OCI-LY7 (cell line): ENCODE measurements at regions of chr10 and their contacts with region 1.

Region 1: DNA sequence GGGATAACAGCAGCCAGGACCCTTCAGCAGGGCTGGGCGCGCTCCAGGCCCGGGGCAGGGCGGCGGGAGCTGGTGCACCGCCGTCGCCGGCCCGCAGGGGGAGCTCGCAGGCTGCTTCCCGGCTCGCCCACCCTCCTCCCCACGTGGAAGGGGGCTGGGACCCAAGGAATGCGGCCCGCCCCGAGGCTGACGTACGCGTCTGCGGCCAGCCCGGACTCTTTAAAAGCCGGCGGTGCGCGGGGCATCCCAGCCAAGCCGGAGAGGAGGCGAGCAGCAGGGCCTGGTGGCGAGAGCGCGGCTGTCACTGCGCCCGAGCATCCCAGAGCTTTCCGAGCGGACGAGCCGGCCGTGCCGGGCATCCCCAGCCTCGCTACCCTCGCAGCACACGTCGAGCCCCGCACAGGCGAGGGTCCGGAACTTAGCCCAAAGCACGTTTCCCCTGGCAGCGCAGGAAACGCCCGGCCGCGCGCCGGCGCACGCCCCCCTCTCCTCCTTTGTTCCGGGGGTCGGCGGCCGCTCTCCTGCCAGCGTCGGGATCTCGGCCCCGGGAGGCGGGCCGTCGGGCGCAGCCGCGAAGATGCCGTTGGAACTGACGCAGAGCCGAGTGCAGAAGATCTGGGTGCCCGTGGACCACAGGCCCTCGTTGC is at the start of gene PFKFB3:
- DNase-seq: peak; percentile 97
- H3K4me3 ChIP-seq: peak within 1 kb of the TSS; percentile 99
- H3K27ac ChIP-seq: peak within 1 kb of the TSS; percentile 63
- H3K4me1 ChIP-seq: peaks cover 53% of the 10 kb centered on the region
- CTCF ChIP-seq: peak; percentile 84
- total RNA-seq, gene PFKFB3: 29.0 and 33.7 TPM in 2 replicates

Region 2: DNA sequence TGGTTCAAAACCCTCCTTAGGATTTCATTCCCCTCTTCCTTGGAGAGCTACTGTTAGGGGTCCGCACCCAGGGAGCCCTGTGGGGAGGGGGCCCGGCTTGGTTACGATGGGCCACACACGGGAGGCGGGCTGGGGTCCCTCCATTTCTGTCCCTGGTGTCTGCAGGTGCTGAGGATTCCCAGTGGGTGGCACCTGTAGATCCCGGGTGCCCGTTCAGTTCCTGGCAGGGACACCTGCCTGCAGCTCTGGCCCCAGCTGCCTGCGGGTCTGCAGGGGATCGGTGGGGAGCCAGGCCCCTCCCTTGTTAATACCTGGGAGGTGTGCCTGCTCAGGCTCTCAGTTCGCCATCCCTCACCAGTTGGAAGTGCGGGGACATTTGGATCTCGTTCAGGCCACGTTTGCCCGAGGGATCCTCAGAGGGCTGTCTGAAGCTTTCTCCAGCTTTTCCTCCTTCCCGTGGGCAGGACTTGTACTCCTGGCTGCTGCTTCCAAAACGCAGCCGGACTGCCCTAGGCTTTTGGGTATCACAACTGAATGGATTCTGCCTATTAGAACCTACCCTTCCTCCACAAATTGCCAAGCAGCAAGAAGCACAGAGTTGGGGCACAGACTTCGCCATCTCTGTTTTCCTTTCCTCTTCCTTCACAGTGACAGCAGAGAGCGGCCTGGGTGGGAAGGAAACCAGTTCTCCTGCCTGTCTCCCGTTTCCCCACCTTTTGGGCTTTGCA is 203.2 kb before region 1 on chr10:
- CTCF ChIA-PET with region 1: no interaction called
- POLR2A ChIA-PET with region 1: no interaction called
- intact Hi-C with region 1: no loop called
- DNase-seq: no peak
- H3K4me3 ChIP-seq: no peak overlapping the region
- H3K27ac ChIP-seq: no peak overlapping the region
- H3K4me1 ChIP-seq: no peaks in the 10 kb centered on the region
- CTCF ChIP-seq: no peak

Region 3: GRCh38 chr10:6108603-6109443 is 94.0 kb before region 1 on chr10:
- CTCF ChIA-PET with region 1: no interaction called
- POLR2A ChIA-PET with region 1: interaction called, 3 read pairs
- intact Hi-C with region 1: loop called (anchors 2 kb)
- DNase-seq: peak; percentile 68
- H3K4me3 ChIP-seq: no peak overlapping the region
- H3K27ac ChIP-seq: no peak overlapping the region
- H3K4me1 ChIP-seq: no peaks in the 10 kb centered on the region
- CTCF ChIP-seq: peak; percentile 91

Region 4: GRCh38 chr10:6144406-6145165 is 58.2 kb before region 1 on chr10:
- CTCF ChIA-PET with region 1: interaction called, 4 read pairs
- POLR2A ChIA-PET with region 1: interaction called, 13 read pairs
- intact Hi-C with region 1: loop called (anchors 5 kb)
- DNase-seq: peak; percentile 88
- H3K4me3 ChIP-seq: peak overlapping the region; percentile 76
- H3K27ac ChIP-seq: peak overlapping the region; percentile 7
- H3K4me1 ChIP-seq: peaks cover 28% of the 10 kb centered on the region
- CTCF ChIP-seq: no peak

Region 5: DNA sequence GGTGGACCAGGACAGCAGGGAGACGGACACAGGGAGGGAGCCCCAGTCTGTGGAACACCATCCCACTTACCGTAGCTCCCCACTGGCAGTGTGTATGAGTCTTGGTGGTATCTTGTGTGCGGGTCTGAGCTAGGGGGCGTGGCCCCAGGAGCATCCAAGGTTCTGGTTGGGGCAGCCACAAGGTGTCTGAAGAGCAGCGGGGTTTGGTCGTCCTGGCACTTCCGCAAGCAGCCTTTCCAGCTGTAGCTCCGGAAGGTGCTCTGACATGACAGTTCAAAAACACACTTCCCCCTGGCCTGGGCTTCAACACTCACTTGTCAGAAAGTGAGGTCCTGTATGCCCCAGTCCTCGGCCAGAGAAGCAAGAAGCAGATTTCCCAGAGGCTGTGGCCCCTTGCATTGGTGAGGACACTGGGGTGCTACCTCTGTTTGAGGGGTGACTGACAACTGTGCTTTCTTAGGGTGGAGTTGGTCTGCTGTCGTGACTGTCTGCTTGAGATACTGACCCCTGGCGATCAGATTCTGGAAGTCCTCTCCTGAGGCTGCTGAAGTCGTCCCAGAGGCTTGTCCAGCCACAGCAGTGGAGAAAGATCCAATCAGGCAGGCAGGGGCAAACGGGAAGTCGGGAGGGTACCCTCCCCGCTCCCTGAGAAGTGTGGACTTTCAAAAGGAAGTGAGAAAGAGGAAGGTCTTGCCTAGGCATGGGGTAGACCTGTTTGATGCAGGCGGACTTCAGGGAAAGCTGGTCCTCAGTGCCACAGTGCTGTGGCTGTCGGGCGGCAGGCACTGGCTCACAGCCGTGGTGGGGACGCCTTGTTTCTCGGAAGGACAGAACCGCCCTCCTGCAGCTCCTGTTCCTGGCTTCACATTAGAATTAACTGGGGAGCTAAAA is 51.5 kb before region 1 on chr10:
- CTCF ChIA-PET with region 1: interaction called, 3 read pairs
- POLR2A ChIA-PET with region 1: no interaction called
- intact Hi-C with region 1: loop called (anchors 2 kb)
- DNase-seq: peak; percentile 76
- H3K4me3 ChIP-seq: peak overlapping the region; percentile 43
- H3K27ac ChIP-seq: peak overlapping the region; percentile 40
- H3K4me1 ChIP-seq: peaks cover 18% of the 10 kb centered on the region
- CTCF ChIP-seq: peak; percentile 84

Region 6: DNA sequence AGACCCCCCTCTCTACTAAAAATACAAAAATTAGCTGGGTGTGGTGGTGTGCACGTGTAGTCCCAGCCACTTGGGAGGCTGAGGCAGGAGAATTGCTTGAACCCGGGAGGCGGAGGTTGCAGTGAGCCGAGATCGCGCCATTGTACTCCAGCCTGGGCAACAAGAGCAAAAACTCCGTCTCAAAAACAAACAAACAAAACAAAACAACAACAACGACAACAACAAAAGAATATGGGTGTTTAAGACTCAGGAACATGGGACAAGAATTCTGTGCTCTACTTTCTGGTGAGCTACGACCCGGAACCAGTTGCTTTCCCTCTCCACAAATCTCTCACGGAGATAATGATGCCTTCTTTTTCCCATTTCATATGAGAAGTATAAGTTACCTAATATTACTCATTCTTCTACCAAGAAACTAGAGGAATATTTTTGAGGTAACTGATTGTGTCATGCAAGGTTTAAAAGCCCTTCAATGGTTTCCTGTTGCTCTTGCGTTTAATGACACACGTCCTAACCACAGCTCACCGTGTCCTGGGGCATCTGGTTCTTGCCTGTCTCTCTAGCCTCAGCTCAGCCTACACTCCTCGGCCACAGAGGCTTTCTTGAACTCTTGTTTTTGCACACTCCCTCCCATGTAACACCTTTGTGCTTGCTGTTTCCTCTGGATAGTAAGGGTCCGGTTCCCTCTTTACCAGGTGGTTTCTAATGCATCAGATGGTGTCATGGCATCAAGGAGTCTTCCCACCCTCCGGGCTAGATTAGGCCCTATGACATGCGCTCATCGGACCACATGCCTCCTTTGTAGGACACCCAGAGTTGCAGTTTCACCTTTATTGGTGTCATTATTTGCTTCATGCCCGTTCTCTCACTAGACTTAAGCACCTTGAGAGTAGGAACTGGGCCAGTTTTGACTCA is 67.4 kb after region 1 on chr10:
- CTCF ChIA-PET with region 1: no interaction called
- POLR2A ChIA-PET with region 1: no interaction called
- intact Hi-C with region 1: no loop called
- DNase-seq: peak; percentile 16
- H3K4me3 ChIP-seq: no peak overlapping the region
- H3K27ac ChIP-seq: no peak overlapping the region
- H3K4me1 ChIP-seq: no peaks in the 10 kb centered on the region
- CTCF ChIP-seq: no peak

Region 7: DNA sequence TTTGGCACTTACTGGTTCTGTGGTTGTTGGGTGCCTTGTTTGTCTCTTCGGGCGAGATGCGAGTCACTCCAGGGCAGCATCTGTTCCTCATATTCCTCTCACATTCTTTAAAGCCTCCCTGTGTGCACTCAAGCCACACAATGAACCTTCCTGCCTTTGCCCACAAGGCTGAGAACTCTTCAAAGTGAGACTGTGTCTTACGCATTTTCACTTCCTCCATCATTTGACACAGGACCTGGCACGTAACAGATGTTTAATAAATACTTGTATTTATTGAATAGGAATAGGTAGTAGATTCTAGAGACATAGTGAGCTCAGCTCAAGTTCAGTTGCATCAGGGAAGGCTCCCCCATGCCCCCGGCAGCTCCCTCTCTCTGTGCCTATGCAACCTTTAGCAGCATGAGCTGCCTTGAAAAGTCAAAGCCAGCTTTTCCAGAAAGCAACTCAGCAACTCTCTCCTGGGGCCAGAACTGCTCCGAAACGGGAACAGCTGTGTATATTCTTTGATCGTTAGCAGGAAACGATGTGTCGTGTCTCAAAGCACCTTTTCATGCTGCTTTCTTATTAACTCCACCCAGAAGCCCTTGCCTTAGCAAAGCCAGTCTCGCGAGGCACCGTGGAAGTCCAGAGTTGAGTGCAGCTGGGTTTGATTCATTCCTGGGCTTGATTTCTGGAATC is 97.4 kb after region 1 on chr10:
- CTCF ChIA-PET with region 1: no interaction called
- POLR2A ChIA-PET with region 1: interaction called, 4 read pairs
- intact Hi-C with region 1: loop called (anchors 5 kb)
- DNase-seq: peak; percentile 89
- H3K4me3 ChIP-seq: peak overlapping the region; percentile 54
- H3K27ac ChIP-seq: peak overlapping the region; percentile 93
- H3K4me1 ChIP-seq: peaks cover 87% of the 10 kb centered on the region
- CTCF ChIP-seq: no peak

Region 8: GRCh38 chr10:6320320-6321010 is 117.7 kb after region 1 on chr10:
- CTCF ChIA-PET with region 1: interaction called, 3 read pairs
- POLR2A ChIA-PET with region 1: interaction called, 3 read pairs
- intact Hi-C with region 1: loop called (anchors 1 kb)
- DNase-seq: peak; percentile 96
- H3K4me3 ChIP-seq: peak overlapping the region; percentile 24
- H3K27ac ChIP-seq: peak overlapping the region; percentile 97
- H3K4me1 ChIP-seq: peaks cover 79% of the 10 kb centered on the region
- CTCF ChIP-seq: no peak

Region 9: GRCh38 chr10:6401562-6402348 is 198.9 kb after region 1 on chr10:
- CTCF ChIA-PET with region 1: interaction called, 17 read pairs
- POLR2A ChIA-PET with region 1: interaction called, 46 read pairs
- intact Hi-C with region 1: loop called (anchors 1 kb)
- DNase-seq: peak; percentile 88
- H3K4me3 ChIP-seq: peak overlapping the region; percentile 29
- H3K27ac ChIP-seq: no peak overlapping the region
- H3K4me1 ChIP-seq: peaks cover 40% of the 10 kb centered on the region
- CTCF ChIP-seq: peak; percentile 90